Transverse colon (tissue), 4 donors: ENCODE measurements at regions of chr6 and their contacts with region 1.

Region 1: GRCh38 chr6:30844091-30844535 is 40.2 kb upstream of the DDR1 start:
- DNase-seq: no peak
- H3K4me3 ChIP-seq: no peak overlapping the region
- H3K27ac ChIP-seq: no peak overlapping the region
- H3K4me1 ChIP-seq: peaks cover 0 to 31% (median 9%) of the 10 kb centered on the region in 4 donors
- H3K27me3 ChIP-seq: no peaks in the 10 kb centered on the region
- CTCF ChIP-seq: no peak
- EP300 ChIP-seq: no peak
- POLR2A ChIP-seq: no peak

Region 2: DNA sequence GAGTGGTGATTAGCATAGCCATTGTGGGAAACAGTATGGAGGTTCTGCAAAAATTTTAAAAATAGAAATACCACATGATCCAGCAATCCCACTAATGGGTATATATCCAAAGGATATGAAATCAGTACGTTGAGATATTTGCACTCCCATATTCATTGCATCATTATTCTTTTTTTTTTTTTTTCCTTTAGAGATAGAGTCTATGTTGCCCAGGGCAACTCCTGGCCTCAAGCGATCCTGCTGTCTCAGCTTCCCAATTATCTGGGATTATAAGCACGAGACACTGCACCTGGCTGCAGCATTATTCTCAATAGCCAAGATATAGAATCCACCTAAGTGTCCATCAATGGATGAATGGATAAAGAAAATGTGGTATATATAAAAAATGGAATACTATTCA is 677.7 kb after region 1 on chr6:
- in situ Hi-C with region 1: no loop called
- intact Hi-C with region 1: loop called (anchors 5 kb)
- DNase-seq: no peak
- H3K4me3 ChIP-seq: no peak overlapping the region
- H3K27ac ChIP-seq: no peak overlapping the region
- H3K4me1 ChIP-seq: no peaks in the 10 kb centered on the region
- H3K27me3 ChIP-seq: no peaks in the 10 kb centered on the region
- CTCF ChIP-seq: no peak
- EP300 ChIP-seq: no peak
- POLR2A ChIP-seq: no peak